ENCODE measurements at regions of chr11 and their contacts with region 1.

Region 1: DNA sequence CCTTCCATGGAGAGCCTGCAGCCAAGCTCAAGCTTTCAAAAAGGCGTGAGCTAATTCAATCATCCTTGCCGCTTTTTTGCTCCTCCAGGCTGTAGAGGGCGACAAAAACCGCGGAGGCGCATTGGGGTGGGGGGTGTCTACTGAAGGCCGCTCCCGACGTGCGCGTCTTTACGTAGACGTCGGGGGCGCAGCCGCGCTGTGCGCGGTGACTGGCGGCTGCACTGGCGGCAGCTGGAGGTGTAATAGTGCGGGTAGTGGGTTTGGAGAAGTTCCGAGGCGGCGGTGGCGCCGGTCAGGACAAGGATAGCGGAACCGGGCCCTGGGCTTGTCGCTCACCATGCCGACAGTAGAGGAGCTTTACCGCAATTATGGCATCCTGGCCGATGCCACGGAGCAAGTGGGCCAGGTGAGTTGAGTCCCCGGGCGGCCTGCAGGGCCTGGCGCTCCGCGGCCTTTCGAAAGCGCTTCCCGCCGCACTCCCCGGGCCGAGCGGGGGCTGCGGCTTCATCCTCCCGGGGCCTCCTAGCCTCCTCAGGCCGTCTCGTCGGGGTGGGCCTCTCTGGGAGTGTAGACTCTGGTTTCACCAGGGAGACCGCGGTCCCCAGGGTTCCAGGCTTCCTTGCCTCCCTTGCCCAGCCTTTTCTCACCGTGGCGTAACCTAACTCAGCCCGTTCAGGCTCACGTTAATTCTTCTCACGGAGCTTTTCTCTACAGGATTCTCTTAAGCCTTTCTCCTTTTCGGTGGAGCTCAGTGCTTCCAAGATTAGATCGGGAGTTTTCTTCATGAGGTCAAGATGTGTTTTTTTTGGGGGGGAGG is at the start of gene API5:
- DNase-seq: peak; percentile 93
- ATAC-seq: peak; percentile 98
- H3K4me3 Mint-ChIP-seq: peak within 1 kb of the TSS; percentile 86
- H3K27ac Mint-ChIP-seq: peak within 1 kb of the TSS; percentile 80
- H3K4me1 Mint-ChIP-seq: peaks cover 17% of the 10 kb centered on the region
- H3K27me3 Mint-ChIP-seq: no peaks in the 10 kb centered on the region
- CTCF ChIP-seq: peak; percentile 50; the same call in 1 of the 2 replicates
- total RNA-seq, gene API5: 138 to 142 TPM (median 140 TPM) in 3 replicates

Region 2: GRCh38 chr11:43135966-43136534 is 175.9 kb before region 1 on chr11:
- CTCF ChIA-PET with region 1: no interaction called
- POLR2A ChIA-PET with region 1: no interaction called
- DNase-seq: no peak
- ATAC-seq: no peak
- H3K4me3 Mint-ChIP-seq: no peak overlapping the region
- H3K27ac Mint-ChIP-seq: no peak overlapping the region
- H3K4me1 Mint-ChIP-seq: no peaks in the 10 kb centered on the region
- H3K27me3 Mint-ChIP-seq: no peaks in the 10 kb centered on the region; the same call in 1 of the 2 replicates
- CTCF ChIP-seq: no peak

Region 3: GRCh38 chr11:43298397-43298796 is 13.6 kb before region 1 on chr11:
- CTCF ChIA-PET with region 1: interaction called, 14 read pairs
- POLR2A ChIA-PET with region 1: no interaction called
- DNase-seq: no peak
- ATAC-seq: no peak
- H3K4me3 Mint-ChIP-seq: no peak overlapping the region
- H3K27ac Mint-ChIP-seq: no peak overlapping the region
- H3K4me1 Mint-ChIP-seq: no peaks in the 10 kb centered on the region
- H3K27me3 Mint-ChIP-seq: peaks cover 15% of the 10 kb centered on the region; the same call in 1 of the 2 replicates
- CTCF ChIP-seq: no peak

Region 4: GRCh38 chr11:43358801-43359421 is 46.9 kb after region 1 on chr11 and contains the start of gene TTC17:
- CTCF ChIA-PET with region 1: interaction called, 22 read pairs
- POLR2A ChIA-PET with region 1: interaction called, 5 read pairs
- DNase-seq: peak; percentile 95
- ATAC-seq: peak; percentile 94
- H3K4me3 Mint-ChIP-seq: peak within 1 kb of the TSS; percentile 95
- H3K27ac Mint-ChIP-seq: peak within 1 kb of the TSS; percentile 96
- H3K4me1 Mint-ChIP-seq: peaks cover 28% of the 10 kb centered on the region
- H3K27me3 Mint-ChIP-seq: 0 out of 2 replicates have a peak, but pooled peaks cover 4% of the 10 kb centered on the region
- CTCF ChIP-seq: no peak
- total RNA-seq, gene TTC17: 69.0 to 74.5 TPM (median 73.5 TPM) in 3 replicates

Region 5: DNA sequence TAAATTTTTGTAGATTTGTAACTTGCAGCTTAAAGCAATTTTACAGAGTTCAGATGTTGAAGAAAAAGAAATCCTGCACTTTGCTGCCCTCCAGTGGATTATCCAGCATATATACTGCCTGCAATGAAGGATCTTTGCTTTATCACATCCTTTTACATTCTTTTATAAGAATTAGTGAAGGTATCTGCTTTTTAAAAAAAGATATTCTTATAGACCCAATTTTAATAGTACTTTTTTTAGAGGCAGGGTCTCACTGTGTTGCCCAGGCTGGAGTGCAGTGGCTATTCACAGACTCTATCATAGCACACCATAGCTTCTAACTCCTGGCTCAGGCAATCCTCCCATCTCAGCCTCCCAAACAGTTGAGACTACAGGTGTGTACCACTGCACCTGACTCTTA is 107.5 kb after region 1 on chr11:
- CTCF ChIA-PET with region 1: interaction called, 24 read pairs
- POLR2A ChIA-PET with region 1: no interaction called
- DNase-seq: no peak
- ATAC-seq: 0 out of 2 replicates have a peak, but pooled peaks have one; percentile 34
- H3K4me3 Mint-ChIP-seq: no peak overlapping the region
- H3K27ac Mint-ChIP-seq: no peak overlapping the region
- H3K4me1 Mint-ChIP-seq: no peaks in the 10 kb centered on the region
- H3K27me3 Mint-ChIP-seq: no peaks in the 10 kb centered on the region
- CTCF ChIP-seq: 0 out of 2 replicates have a peak, but pooled peaks have one; percentile 33

Measured in WTC11 (cell line).